Activated B cell treated with CpG ODN at 0.5 μM for 24 hours (primary cell): ENCODE measurements at regions of chr14 and their contacts with region 1.

Region 1: GRCh38 chr14:65321370-65321875 is 91.1 kb upstream of the FUT8 start:
- DNase-seq: no peak
- ATAC-seq: no peak
- H3K4me3 Mint-ChIP-seq: peak overlapping the region; percentile 21
- H3K27ac Mint-ChIP-seq: peak overlapping the region; percentile 62
- H3K4me1 Mint-ChIP-seq: peaks cover 77% of the 10 kb centered on the region
- H3K27me3 Mint-ChIP-seq: no peaks in the 10 kb centered on the region
- CTCF ChIP-seq: no peak

Region 2: DNA sequence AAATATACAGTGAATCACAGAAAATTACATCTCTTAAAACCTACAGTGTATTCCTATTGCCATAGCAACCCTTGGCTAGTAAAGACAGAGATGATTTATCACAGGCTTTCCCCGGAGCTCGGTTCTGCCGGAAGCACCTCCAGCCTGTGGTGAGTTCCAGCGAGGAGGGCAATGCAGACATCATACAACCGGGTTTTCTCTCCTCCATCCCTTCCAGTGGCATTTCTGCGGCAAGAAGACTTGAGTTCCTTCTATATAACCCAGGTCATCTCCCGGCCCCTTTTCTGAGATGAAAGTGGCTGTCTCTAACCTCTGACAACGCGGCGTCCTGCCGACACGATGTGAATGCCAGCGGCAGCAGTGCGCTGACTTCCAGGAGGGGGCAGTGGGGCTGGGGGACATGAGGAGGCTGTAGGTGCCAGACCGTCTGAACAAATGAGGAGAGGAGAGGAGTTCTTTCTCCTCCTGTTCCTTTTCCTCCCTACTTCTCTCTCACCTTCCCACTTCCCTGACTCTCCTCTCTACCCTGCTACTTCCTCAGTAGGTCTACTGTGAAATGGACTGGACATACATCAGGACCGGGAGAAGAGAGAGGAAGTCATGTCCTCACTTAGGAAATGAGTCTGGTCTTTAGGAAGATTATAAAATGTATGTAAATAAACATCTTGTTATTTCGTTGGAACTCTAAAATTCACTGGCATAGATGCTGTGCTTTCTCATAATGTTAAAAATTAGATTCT is 150.5 kb before region 1 on chr14:
- CTCF ChIA-PET with region 1: interaction called, 3 read pairs
- POLR2A ChIA-PET with region 1: interaction called, 19 read pairs
- intact Hi-C with region 1: no loop called
- DNase-seq: peak; percentile 52
- ATAC-seq: peak; percentile 56
- H3K4me3 Mint-ChIP-seq: peak overlapping the region; percentile 87
- H3K27ac Mint-ChIP-seq: peak overlapping the region; percentile 85
- H3K4me1 Mint-ChIP-seq: peaks cover 52% of the 10 kb centered on the region
- H3K27me3 Mint-ChIP-seq: no peaks in the 10 kb centered on the region
- CTCF ChIP-seq: no peak

Region 3: DNA sequence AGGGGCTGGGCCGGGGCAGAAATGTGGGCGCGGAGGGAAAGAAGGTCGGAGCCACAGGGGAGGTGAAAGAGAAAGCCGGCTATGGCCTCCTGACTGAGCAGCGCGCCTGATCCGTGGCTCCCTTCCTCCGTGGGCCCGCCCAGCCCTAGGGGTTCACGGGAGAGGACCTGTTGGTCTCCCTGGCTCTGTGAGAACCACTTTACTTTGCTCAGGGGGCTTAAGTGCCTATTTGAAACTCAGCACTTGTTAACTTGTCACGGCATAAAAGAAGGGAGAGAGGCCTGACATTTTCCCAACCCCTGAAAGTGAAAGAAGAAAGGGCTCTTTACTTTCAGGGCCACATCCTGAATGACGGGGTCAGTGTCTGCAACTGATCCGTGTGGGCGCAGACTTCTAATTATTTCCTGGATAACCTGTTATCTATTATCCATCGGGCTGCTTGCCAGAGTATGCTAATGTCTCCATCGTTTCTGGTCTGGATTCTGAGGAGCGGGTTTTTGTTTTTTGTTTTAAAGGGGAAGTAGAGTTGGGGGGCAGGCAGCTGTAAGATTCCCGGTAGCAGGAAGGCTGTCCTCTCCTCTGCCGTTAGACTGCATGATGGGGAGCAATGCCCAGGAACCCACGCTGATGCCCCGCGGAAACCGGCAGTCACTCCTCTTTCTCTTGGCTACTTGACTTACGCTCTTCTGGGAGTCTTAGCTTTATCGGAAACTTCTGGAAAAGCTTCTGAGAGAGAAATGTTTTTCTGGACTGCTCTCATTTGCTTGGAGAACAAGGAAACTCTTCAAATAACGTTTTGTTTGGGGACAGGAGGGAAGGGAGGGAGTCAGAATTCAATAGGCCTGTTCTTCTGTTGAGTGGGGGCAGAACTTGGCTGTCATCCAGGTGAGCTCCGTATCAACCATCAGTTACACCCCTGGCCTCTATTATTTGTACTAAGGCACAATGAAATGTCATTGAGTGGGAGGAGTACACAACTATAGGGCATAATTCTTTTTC is 91.4 kb before region 1 on chr14:
- CTCF ChIA-PET with region 1: no interaction called
- POLR2A ChIA-PET with region 1: interaction called, 21 read pairs
- intact Hi-C with region 1: loop called (anchors 1 kb)
- DNase-seq: no peak
- ATAC-seq: peak; percentile 32
- H3K4me3 Mint-ChIP-seq: peak overlapping the region; percentile 86
- H3K27ac Mint-ChIP-seq: peak overlapping the region; percentile 87
- H3K4me1 Mint-ChIP-seq: peaks cover 64% of the 10 kb centered on the region
- H3K27me3 Mint-ChIP-seq: no peaks in the 10 kb centered on the region
- CTCF ChIP-seq: no peak

Region 4: GRCh38 chr14:65302571-65303189 is 18.7 kb before region 1 on chr14:
- CTCF ChIA-PET with region 1: interaction called, 9 read pairs
- POLR2A ChIA-PET with region 1: interaction called, 165 read pairs
- intact Hi-C with region 1: loop called (anchors 1 kb)
- DNase-seq: no peak
- ATAC-seq: peak; percentile 40
- H3K4me3 Mint-ChIP-seq: peak overlapping the region; percentile 48
- H3K27ac Mint-ChIP-seq: peak overlapping the region; percentile 96
- H3K4me1 Mint-ChIP-seq: peaks cover 79% of the 10 kb centered on the region
- H3K27me3 Mint-ChIP-seq: no peaks in the 10 kb centered on the region
- CTCF ChIP-seq: no peak

Region 5: DNA sequence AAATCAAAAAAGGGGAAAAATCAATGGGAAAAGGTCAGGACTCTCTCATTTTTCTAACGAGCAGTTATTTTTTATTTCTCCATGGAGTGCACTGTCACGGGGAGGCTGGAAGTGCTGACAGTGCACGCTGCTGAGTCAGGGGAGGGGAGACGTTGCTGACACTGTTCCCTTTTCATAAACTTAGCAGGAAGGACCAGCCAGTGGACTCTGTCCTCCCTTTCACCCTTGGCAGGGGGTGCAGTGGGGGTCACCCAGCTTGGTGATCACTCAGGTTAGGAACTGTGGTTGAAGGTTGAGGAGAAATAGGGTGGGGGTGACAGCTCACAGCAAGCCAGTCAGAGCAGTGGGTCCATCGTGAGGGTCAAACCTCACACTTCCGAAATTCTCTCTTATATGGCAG is 25.5 kb after region 1 on chr14:
- CTCF ChIA-PET with region 1: interaction called, 5 read pairs
- POLR2A ChIA-PET with region 1: interaction called, 11 read pairs
- intact Hi-C with region 1: loop called (anchors 1 kb)
- DNase-seq: no peak
- ATAC-seq: no peak
- H3K4me3 Mint-ChIP-seq: no peak overlapping the region
- H3K27ac Mint-ChIP-seq: no peak overlapping the region
- H3K4me1 Mint-ChIP-seq: peaks cover 34% of the 10 kb centered on the region
- H3K27me3 Mint-ChIP-seq: no peaks in the 10 kb centered on the region
- CTCF ChIP-seq: no peak

Region 6: GRCh38 chr14:66003082-66003725 is 681.8 kb after region 1 on chr14:
- CTCF ChIA-PET with region 1: no interaction called
- POLR2A ChIA-PET with region 1: no interaction called
- intact Hi-C with region 1: no loop called
- DNase-seq: no peak
- ATAC-seq: no peak
- H3K4me3 Mint-ChIP-seq: no peak overlapping the region
- H3K27ac Mint-ChIP-seq: no peak overlapping the region
- H3K4me1 Mint-ChIP-seq: no peaks in the 10 kb centered on the region
- H3K27me3 Mint-ChIP-seq: peaks cover 32% of the 10 kb centered on the region
- CTCF ChIP-seq: no peak